ENCODE measurements at regions of chr9 and their contacts with region 1.

Region 1: GRCh38 chr9:34899535-34900158 is 58.4 kb upstream of the PHF24 start:
- DNase-seq: peak; percentile 94
- H3K4me3 Mint-ChIP-seq: no peak overlapping the region
- H3K27ac Mint-ChIP-seq: no peak overlapping the region
- H3K4me1 Mint-ChIP-seq: no peaks in the 10 kb centered on the region
- H3K27me3 Mint-ChIP-seq: peaks cover 49% of the 10 kb centered on the region

Region 2: DNA sequence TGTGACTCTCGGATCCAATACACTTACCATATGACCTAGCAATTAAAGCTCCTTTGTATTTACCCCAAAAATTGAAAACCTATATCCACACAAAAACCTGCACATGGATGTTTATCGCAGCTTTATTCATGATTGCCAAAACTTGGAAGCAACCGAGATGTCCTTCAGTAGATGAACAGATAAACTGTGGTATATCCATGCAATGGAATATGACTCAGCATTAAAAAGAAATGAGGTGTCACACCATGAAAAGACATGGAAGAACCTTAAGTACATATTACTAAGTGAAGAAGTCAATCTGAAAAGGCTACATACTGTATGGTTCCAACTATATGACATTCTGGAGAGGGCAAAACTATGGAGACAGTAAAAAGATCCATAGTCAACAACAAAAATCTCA is 23.6 kb before region 1 on chr9:
- intact Hi-C with region 1: no loop called
- DNase-seq: no peak
- H3K4me3 Mint-ChIP-seq: no peak overlapping the region
- H3K27ac Mint-ChIP-seq: no peak overlapping the region
- H3K4me1 Mint-ChIP-seq: no peaks in the 10 kb centered on the region
- H3K27me3 Mint-ChIP-seq: peaks cover 21% of the 10 kb centered on the region

Region 3: DNA sequence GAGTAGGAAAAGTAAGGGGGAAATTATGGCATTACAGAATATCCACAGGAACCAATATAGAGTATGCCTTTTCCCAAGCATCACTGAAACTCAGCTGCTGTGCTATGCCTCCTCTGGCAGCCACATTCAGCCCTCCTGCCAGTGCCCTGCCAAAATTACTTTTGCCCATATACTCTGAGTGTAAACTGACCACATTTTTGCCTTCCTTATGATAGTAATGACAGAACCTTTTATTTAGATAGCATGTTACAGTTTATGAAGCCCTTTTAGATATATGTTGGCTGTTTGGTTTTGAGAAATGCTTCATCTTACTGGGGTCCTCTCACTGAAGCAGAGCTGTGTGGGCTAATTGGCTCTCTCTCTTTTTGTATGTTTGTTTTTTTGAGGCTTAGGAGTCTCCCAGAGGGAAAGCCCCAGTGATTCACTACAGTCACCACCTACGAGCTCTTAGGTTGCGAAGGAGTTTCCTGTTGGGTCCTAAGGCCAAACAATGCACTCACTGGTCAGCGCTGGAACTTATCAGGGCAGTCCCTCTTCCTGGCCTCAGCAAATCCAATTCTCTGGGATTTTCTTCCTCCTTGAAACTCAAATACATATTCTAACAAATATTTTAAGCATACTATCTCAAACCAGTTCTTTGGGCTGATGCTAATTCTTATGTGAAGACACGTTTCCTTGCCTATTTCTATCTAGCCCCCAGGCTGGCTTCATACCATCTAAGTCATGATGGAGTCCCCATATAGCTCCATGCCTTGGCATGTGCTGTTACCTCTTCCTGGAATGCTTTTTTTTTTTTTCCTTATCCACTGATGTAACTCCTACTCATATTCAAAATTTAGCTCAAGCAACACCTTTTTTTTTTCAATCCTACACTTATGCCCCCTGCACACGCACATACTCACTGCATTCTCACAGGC is 62.2 kb after region 1 on chr9:
- intact Hi-C with region 1: loop called (anchors 5 kb)
- DNase-seq: no peak
- H3K4me3 Mint-ChIP-seq: peak overlapping the region; percentile 36
- H3K27ac Mint-ChIP-seq: peak overlapping the region; percentile 45
- H3K4me1 Mint-ChIP-seq: peaks cover 36% of the 10 kb centered on the region
- H3K27me3 Mint-ChIP-seq: peaks cover 58% of the 10 kb centered on the region

Region 4: DNA sequence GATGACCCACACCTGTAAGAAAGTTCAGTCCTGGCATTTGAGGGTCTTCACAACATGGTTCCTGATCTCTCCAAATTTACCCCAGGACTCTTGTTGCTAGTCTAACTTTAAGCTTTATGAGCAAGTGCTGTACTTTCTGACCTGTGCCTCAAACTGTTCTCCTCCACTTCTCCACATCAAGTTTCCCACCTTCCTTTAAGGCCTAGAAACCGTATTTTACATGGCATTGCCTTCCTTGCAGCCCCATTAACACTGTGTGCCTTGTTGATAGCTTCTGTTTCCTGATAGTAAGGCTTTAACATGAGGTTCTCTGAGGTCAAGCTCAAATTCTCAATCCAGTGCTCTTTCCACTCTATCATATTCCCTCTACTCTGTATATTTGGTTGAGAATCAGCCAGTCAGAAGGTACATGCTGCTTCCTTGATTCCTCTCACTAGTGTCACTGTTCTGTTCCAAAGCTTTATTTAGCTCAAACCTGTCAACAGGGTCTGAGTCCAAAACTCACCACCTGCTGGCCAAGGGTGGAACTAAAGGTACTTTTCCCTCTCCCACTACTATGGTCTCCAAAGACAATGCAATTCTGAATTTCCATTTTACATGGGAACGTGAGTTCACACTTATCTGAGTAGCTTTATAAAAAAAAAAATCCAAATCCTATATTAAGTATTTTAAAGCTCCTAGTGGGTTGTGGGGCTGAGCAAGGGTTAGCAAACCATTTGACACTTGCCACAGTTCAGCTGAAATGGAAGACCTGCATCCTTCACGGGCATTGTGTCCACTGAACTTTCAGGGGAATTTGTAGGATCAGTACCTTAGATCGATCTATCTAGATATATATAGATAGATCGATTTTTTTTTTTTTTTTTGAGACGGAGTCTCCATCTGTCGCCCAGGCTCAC is 151.7 kb after region 1 on chr9:
- intact Hi-C with region 1: loop called (anchors 1 kb)
- DNase-seq: peak; percentile 87
- H3K4me3 Mint-ChIP-seq: no peak overlapping the region
- H3K27ac Mint-ChIP-seq: peak overlapping the region; percentile 2
- H3K4me1 Mint-ChIP-seq: peaks cover 4% of the 10 kb centered on the region
- H3K27me3 Mint-ChIP-seq: no peaks in the 10 kb centered on the region

Region 5: DNA sequence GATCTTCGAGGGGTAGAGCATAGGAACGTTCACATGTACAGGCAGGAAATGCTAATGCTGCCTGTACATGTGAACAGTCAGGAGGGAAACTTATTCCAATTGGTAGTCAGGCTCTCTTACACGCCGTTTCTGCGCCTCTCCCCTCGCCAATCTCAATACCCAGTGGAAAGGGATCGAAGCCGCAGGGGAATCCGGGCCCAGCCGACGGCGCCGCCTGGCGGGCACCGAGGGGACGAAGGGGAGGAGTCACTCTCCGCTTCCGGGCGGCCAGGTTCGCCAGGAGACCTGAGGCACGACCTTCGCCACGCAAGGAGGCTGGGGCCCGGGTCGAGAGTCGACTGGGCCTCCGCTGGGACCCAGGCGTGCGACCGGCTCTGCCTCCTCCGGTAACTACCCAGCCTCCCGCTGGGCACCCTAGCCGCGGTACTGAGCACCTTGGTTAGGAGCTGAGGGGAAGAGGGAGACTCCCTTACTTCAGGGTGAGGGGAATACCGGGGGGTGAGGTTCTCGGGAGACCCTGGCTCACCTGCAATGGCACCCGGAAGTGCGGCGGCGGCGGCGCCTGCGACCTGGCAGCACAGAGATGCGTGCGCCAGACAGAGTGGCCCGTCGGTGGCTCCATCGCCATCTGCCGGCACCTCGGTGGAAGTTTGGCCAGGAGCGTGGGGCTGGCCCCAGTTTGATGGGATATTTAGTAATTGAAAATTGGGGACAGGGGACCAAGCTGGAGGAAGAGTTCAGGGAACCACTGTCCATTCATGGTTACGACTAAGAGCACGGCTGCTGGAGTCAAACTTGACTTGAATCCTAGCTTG is 196.6 kb after region 1 on chr9 and contains the start of gene PIGO:
- intact Hi-C with region 1: loop called (anchors 1 kb)
- DNase-seq: peak; percentile 97
- H3K4me3 Mint-ChIP-seq: peak within 1 kb of the TSS; percentile 91
- H3K27ac Mint-ChIP-seq: peak within 1 kb of the TSS; percentile 95
- H3K4me1 Mint-ChIP-seq: peaks cover 28% of the 10 kb centered on the region
- H3K27me3 Mint-ChIP-seq: no peaks in the 10 kb centered on the region
- total RNA-seq, gene PIGO: 32.5 and 37.2 TPM in 2 replicates

Region 6: DNA sequence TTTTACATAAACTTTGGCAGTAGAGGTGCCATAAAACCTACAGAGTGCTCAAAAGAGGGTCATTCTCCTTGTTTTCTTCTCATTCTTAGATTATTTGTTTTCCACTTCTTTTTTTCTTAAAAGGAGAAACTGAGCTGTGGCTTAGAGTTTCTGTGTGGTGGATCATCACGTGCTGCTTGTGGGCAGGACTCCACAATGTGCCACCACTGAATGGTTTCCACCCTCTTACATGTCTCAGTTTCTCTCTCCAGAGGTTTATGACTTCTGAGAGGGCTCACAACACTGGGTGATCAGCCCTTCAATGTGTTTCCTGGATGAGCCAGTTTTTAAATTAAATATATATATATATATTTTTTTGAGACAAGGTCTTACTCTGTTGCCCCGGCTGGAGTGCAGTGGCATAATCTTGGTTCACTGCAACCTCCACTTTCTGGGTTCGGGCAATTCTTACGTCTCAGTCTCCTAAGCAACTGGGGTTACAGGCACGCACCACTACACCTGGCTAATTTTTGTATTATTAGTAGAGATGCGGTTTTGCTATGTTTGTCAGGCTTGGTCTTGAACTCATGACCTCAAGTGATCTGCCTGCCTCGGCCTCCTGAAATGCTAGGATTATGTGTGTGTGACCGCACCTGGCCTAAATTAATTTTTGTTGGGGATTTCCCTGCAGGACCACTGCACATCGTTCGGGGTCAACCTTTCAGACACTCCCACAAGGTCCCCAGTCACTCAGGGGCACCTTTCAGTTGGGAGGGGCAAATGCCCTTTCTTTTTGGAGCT is 259.0 kb after region 1 on chr9:
- intact Hi-C with region 1: no loop called
- DNase-seq: no peak
- H3K4me3 Mint-ChIP-seq: no peak overlapping the region
- H3K27ac Mint-ChIP-seq: no peak overlapping the region
- H3K4me1 Mint-ChIP-seq: peaks cover 12% of the 10 kb centered on the region
- H3K27me3 Mint-ChIP-seq: peaks cover 15% of the 10 kb centered on the region

Region 7: GRCh38 chr9:35258676-35259474 is 359.2 kb after region 1 on chr9:
- intact Hi-C with region 1: loop called (anchors 5 kb)
- DNase-seq: peak; percentile 78
- H3K4me3 Mint-ChIP-seq: no peak overlapping the region
- H3K27ac Mint-ChIP-seq: no peak overlapping the region
- H3K4me1 Mint-ChIP-seq: no peaks in the 10 kb centered on the region
- H3K27me3 Mint-ChIP-seq: peaks cover 10% of the 10 kb centered on the region

Region 8: GRCh38 chr9:35470894-35471293 is 571.2 kb after region 1 on chr9:
- intact Hi-C with region 1: loop called (anchors 10 kb)
- DNase-seq: no peak
- H3K4me3 Mint-ChIP-seq: no peak overlapping the region
- H3K27ac Mint-ChIP-seq: no peak overlapping the region
- H3K4me1 Mint-ChIP-seq: no peaks in the 10 kb centered on the region
- H3K27me3 Mint-ChIP-seq: peaks cover 39% of the 10 kb centered on the region

Measured in activated CD4-positive, alpha-beta T cell treated with anti-CD3 and anti-CD28 coated beads, Interleukin-2, amount 10 ng/mL, durations not matched to agents 24 days and 14 days (primary cell).